Endothelial cell of umbilical vein (primary cell): ENCODE measurements at regions of chr16 and their contacts with region 1.

Region 1: GRCh38 chr16:78749745-78750268 is 650.4 kb downstream of the WWOX start:
- DNase-seq: no peak
- H3K4me3 ChIP-seq: no peak overlapping the region
- H3K27ac ChIP-seq: no peak overlapping the region
- H3K4me1 ChIP-seq: no peaks in the 10 kb centered on the region
- H3K27me3 ChIP-seq: no peaks in the 10 kb centered on the region
- CTCF ChIP-seq: no peak
- POLR2A ChIP-seq: no peak

Region 2: DNA sequence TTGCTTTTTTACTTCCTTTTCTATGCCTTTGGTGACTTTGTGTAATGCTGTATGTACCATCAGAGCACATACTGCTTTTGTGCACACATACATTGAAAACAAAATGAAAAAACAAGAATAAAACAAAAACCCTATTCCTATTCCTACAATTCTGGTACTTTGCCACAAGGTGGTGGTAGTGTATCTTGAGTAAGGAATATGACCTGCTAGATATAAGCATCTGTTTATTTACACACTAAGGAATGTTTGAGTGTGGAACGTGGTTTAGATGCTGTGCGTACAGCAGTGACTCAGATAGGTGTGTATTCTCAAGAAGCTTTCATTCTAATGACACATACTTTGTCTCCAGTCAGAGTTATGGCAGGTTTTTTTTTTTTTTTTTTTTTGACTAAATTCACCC is 44.1 kb before region 1 on chr16:
- CTCF ChIA-PET with region 1: no interaction called
- POLR2A ChIA-PET with region 1: no interaction called
- dilution Hi-C with region 1: no loop called
- intact Hi-C with region 1: no loop called
- DNase-seq: no peak
- H3K4me3 ChIP-seq: no peak overlapping the region
- H3K27ac ChIP-seq: no peak overlapping the region
- H3K4me1 ChIP-seq: no peaks in the 10 kb centered on the region
- H3K27me3 ChIP-seq: no peaks in the 10 kb centered on the region
- CTCF ChIP-seq: no peak
- POLR2A ChIP-seq: no peak

Region 3: GRCh38 chr16:78816499-78817195 is 66.8 kb after region 1 on chr16:
- CTCF ChIA-PET with region 1: no interaction called
- POLR2A ChIA-PET with region 1: no interaction called
- dilution Hi-C with region 1: no loop called
- intact Hi-C with region 1: no loop called
- DNase-seq: no peak
- H3K4me3 ChIP-seq: no peak overlapping the region
- H3K27ac ChIP-seq: no peak overlapping the region
- H3K4me1 ChIP-seq: no peaks in the 10 kb centered on the region
- H3K27me3 ChIP-seq: no peaks in the 10 kb centered on the region
- CTCF ChIP-seq: no peak
- POLR2A ChIP-seq: no peak

Region 4: DNA sequence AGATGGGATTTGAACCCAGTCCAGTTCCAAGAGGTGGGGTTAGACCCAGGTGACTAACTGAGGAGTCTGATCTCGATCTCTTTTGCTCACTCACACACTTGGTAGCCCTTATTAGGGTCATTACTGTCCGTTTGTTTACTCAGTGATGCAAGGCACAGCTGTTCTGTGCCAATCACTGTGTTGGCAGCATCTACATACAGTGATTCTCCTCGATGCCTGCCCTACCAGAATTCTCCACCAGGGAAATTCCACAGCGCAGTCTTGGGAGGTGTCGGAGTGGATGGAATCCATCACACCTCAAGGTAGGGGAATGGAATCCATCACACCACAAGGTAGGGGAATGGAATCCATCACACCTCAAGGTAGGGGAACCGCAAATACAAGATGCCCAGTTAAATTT is 571.1 kb after region 1 on chr16:
- CTCF ChIA-PET with region 1: no interaction called
- POLR2A ChIA-PET with region 1: no interaction called
- dilution Hi-C with region 1: no loop called
- intact Hi-C with region 1: loop called (anchors 5 kb)
- DNase-seq: no peak
- H3K4me3 ChIP-seq: no peak overlapping the region
- H3K27ac ChIP-seq: no peak overlapping the region
- H3K4me1 ChIP-seq: no peaks in the 10 kb centered on the region
- H3K27me3 ChIP-seq: no peaks in the 10 kb centered on the region
- CTCF ChIP-seq: no peak
- POLR2A ChIP-seq: no peak